Dorsolateral prefrontal cortex (tissue), 120 donors: ENCODE measurements at regions of chr7 and their contacts with region 1.

Region 1: DNA sequence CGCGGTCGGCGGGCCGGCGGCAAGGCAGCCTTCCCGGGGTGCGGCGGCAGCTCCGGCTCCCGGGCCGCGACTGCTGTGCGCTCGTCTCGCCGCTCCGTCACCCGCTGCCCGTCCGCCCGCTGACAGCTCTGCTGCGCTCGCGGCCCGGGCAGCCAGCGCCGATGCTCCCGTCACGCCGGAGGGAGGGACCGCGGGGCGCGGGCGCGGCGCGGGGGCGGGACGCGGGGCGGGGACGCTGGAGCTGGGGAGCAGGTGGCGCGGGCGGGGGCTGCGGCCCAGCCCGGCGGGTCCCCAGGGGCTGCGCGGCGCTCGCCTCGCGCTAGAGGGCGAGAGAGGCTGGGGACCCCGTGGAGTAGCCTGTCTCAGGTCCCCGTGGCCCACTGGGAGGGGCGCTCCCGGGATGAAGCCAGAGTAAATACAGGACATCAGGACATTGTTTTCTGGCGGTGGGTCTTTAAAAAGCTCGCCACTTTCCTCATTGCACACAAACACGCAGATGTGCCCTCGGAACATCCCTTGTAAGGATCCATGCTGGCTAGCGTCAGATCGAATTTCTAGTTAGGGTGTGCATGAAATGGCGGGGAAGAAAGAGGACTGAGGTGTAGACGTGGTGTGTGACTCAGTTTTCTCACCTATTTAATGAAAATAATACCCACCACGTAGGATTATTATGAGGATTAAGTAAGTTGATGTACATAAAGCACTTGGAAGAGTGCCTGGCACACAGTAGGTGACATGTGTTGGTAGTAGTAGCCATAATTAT is at the start of gene ELAPOR2:
- DNase-seq: peak; percentile 74 to 94 (median 85)
- H3K4me3 ChIP-seq: peak within 1 kb of the TSS; percentile 59 to 97 (median 80)
- H3K27ac ChIP-seq: peak within 1 kb of the TSS; percentile 11 to 94 (median 89)
- H3K27me3 ChIP-seq: no peaks in the 10 kb centered on the region
- CTCF ChIP-seq: peak in 55 of 56 donors; percentile 20 to 87 (median 64)
- total RNA-seq, gene ELAPOR2: 20.9 to 146 (median 56.8) TPM

Region 2: DNA sequence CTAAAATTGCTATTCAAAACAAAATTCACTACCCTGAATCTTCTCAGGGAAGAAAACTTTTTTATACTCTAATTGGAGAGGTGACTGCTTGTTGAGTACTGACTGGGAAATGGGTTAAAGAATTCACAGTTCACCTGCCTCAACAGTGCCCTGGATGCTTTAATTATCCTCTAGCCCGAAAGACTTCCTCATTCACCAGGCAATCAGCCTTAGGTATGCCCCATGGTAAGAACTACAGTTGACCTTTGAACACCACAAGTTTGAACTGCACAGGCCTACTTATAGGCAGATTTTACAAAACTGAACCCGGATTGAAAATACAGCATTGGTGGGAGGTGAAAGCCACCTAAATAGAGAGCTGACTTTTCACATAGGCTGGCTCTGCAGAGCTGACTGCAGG is 175.6 kb before region 1 on chr7:
- intact Hi-C with region 1: no loop called
- DNase-seq: no peak
- H3K4me3 ChIP-seq: no peak overlapping the region
- H3K27ac ChIP-seq: no peak overlapping the region
- H3K27me3 ChIP-seq: no peaks in the 10 kb centered on the region
- CTCF ChIP-seq: no peak

Region 3: DNA sequence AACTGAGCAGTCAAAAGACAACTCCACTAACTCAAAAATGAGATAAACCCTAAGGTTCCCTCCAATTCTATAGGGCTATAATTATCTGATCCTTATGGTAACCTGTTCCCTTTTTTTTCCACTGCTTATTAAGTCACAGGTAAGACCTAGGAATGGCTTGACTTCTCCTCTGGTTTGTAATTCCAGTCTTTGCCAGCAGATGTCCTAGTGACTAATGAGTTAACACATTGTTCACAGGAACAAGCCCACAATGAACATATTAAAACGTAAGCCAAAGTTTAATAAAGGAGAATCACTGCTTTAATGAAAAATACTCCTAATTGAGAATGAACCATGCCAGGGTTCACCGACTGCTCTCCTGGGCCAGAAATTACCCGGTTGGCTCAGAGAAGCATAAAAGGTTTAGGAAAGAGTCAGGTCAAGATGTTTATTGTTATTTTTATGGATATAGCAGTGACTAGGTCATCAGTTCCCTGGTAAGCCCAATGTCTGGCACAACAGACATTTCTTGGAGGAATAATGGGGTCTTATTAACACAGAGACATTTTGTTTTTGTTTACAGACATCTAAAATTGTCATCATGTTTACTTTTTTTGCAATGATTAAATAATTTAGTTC is 120.4 kb before region 1 on chr7:
- intact Hi-C with region 1: loop called (anchors 2 to 5 kb)
- DNase-seq: peak in 2 of 10 donors; percentile 7 to 55
- H3K4me3 ChIP-seq: peak overlapping the region in 2 of 59 donors; percentile 15 to 21
- H3K27ac ChIP-seq: peak overlapping the region in 34 of 59 donors; percentile 3 to 91 (median 44)
- H3K27me3 ChIP-seq: no peaks in the 10 kb centered on the region
- CTCF ChIP-seq: peak; percentile 43 to 90 (median 80)

Region 4: GRCh38 chr7:86980223-86980622 is 79.5 kb before region 1 on chr7:
- intact Hi-C with region 1: no loop called
- DNase-seq: no peak
- H3K4me3 ChIP-seq: no peak overlapping the region
- H3K27ac ChIP-seq: peak overlapping the region in 3 of 59 donors; percentile 10 to 27 (median 12)
- H3K27me3 ChIP-seq: no peaks in the 10 kb centered on the region
- CTCF ChIP-seq: no peak

Region 5: GRCh38 chr7:87003872-87004798 is 55.6 kb before region 1 on chr7:
- intact Hi-C with region 1: loop called in 1 of 2 experiments (anchors 5 kb)
- DNase-seq: peak in 2 of 10 donors; percentile 35 to 48
- H3K4me3 ChIP-seq: peak overlapping the region in 54 of 59 donors; percentile 1 to 63 (median 32)
- H3K27ac ChIP-seq: peak overlapping the region; percentile 10 to 91 (median 79)
- H3K27me3 ChIP-seq: no peaks in the 10 kb centered on the region
- CTCF ChIP-seq: peak in 1 of 56 donors; percentile 9

Region 6: DNA sequence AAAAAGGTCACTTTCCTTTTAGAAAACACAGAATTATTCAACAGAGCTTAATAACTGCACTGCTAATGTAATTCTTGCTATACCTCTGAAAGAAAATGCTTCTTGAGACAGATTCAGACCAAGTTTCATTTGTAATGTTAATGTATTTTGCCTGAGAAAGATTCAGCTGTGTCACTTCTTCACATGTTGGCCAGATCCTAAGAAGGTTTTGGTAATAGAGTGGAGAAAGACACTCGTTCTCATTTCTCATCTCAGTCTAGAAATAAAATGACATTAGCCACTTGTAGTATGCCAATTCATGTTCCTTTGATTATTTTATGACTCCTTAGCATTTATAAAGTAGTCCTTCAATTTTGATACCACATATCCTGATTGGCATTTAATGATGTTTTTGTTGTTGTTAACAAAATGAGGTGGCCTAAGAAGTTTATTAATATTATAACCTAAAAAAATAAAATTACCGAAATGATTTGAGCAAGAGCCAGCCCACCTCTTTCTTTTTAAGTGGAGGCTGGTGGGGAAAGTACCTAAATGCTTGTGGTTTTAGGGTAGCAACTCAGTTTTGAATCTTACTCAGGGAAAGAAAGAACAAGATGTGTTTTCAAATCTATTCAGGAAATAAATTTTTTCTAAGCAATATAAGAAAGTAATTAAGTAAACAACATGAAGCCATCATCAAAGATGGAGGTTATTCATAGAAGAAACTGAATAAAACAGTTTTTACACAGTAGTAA is 16.1 kb after region 1 on chr7:
- intact Hi-C with region 1: no loop called
- DNase-seq: no peak
- H3K4me3 ChIP-seq: no peak overlapping the region
- H3K27ac ChIP-seq: no peak overlapping the region
- H3K27me3 ChIP-seq: no peaks in the 10 kb centered on the region
- CTCF ChIP-seq: no peak

Region 7: DNA sequence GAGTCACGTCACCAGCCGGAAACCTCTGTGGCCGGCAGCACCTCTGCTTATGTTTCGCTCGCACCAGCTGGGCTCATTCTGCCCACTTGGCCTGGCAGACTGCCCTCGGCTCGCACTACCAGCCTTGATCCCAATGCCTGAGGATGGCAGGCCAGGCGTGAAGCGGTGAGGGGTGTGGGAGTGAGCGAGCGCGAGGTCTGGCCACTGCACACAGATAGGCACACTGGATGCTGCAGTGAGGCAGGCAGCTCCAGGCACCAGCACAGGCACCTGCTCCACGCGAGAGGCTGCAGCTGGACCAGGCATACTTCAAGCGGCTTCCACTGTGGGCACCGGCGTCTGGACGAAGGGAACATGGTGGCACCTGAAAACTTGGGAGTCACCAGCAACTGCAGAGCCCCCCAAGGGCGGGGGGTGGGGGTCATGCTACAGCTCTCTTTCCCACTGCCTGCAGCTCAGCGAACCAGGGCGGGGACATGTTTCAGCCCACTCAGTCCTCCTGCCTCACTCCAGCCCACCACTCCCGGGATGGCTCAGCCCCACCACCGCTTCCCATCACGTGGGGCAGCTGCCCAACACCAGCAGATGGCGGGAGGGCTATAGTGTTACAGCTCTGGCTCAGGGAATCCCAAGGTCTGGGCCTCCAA is 87.2 kb after region 1 on chr7:
- intact Hi-C with region 1: loop called (anchors 2 to 5 kb)
- DNase-seq: peak in 5 of 10 donors; percentile 3 to 42 (median 39)
- H3K4me3 ChIP-seq: no peak overlapping the region
- H3K27ac ChIP-seq: peak overlapping the region in 1 of 59 donors; percentile 20
- H3K27me3 ChIP-seq: no peaks in the 10 kb centered on the region
- CTCF ChIP-seq: no peak

Region 8: DNA sequence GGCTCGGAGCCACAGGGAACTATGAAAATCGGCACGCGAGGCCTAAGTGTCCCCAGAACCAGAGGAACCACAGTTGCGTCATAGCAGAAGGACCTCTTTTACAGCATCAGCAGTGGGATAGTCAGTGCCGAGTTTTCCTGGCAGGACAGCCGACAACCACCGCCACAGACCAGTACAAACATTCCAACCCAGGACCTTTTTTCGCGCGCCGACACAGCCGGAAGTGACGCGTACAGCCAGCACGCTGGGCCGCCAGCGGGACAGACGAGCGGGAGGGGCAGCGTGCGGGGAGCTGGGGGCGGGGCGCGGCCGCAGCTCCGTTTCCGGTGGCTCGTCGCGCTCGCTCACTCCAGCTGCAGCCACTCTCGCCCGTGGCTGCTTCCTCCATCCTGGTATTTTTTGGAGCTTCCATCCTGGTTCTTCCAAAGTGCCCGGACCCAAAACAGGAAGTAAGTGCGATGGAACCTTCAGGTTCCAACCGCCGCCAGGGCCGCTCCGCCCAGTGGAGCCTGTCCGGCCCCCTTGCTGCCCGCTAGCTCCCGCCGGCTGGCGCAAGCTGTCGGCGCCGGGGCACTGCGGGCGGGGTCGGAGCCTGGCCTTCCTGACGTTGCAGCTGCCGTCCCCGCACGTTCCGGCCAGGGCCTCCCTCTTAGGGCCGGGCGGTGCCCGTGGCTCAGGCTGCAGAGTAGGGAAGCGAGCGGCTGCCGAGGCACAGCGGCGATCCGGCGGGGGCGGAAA is 92.6 kb after region 1 on chr7 and contains the start of gene DMTF1:
- intact Hi-C with region 1: loop called (anchors 2 to 5 kb)
- DNase-seq: peak; percentile 91 to 96 (median 94)
- H3K4me3 ChIP-seq: peak within 1 kb of the TSS; percentile 60 to 92 (median 82)
- H3K27ac ChIP-seq: peak within 1 kb of the TSS; percentile 92 to 100 (median 98)
- H3K27me3 ChIP-seq: no peaks in the 10 kb centered on the region
- CTCF ChIP-seq: peak in 30 of 56 donors; percentile 7 to 54 (median 28)
- total RNA-seq, gene DMTF1: 109 to 192 (median 149) TPM

Region 9: GRCh38 chr7:87219545-87220025 is 159.9 kb after region 1 on chr7 and contains the start of gene TMEM243:
- intact Hi-C with region 1: loop called in 1 of 2 experiments (anchors 10 kb)
- DNase-seq: peak; percentile 35 to 81 (median 57)
- H3K4me3 ChIP-seq: peak within 1 kb of the TSS; percentile 60 to 99 (median 90)
- H3K27ac ChIP-seq: peak within 1 kb of the TSS; percentile 28 to 90 (median 80)
- H3K27me3 ChIP-seq: no peaks in the 10 kb centered on the region
- CTCF ChIP-seq: peak in 15 of 56 donors; percentile 10 to 44 (median 29)
- total RNA-seq, gene TMEM243: 9.4 to 33.2 (median 21.5) TPM